Natural killer cell (primary cell): ENCODE measurements at regions of chr6 and their contacts with region 1.

Region 1: GRCh38 chr6:105733565-105734162 is 330.8 kb upstream of the PREP start:
- DNase-seq: peak in 1 of 2 donors; percentile 71
- ATAC-seq: no peak
- H3K4me3 ChIP-seq: no peak overlapping the region
- H3K4me3 Mint-ChIP-seq: no peak overlapping the region
- H3K27ac ChIP-seq: no peak overlapping the region
- H3K27ac Mint-ChIP-seq: no peak overlapping the region
- H3K4me1 ChIP-seq: no peaks in the 10 kb centered on the region
- H3K4me1 Mint-ChIP-seq: no peaks in the 10 kb centered on the region
- H3K27me3 ChIP-seq: no peaks in the 10 kb centered on the region
- H3K27me3 Mint-ChIP-seq: no peaks in the 10 kb centered on the region
- CTCF ChIP-seq: peak; percentile 68

Region 2: GRCh38 chr6:105452924-105453756 is 280.5 kb before region 1 on chr6:
- intact Hi-C with region 1: loop called (anchors 10 kb)
- DNase-seq: peak; percentile 45 to 81
- ATAC-seq: peak; percentile 97 to 100 (median 97)
- H3K4me3 ChIP-seq: peak overlapping the region; percentile 5
- H3K4me3 Mint-ChIP-seq: peak overlapping the region; percentile 72
- H3K27ac ChIP-seq: peak overlapping the region; percentile 84
- H3K27ac Mint-ChIP-seq: peak overlapping the region; percentile 86 to 91
- H3K4me1 ChIP-seq: peaks cover 16% of the 10 kb centered on the region
- H3K4me1 Mint-ChIP-seq: peaks cover 31 to 39% of the 10 kb centered on the region in 2 donors
- H3K27me3 ChIP-seq: no peaks in the 10 kb centered on the region
- H3K27me3 Mint-ChIP-seq: peaks cover 0 to 5% of the 10 kb centered on the region in 2 donors
- CTCF ChIP-seq: no peak

Region 3: GRCh38 chr6:105484238-105485161 is 249.2 kb before region 1 on chr6:
- intact Hi-C with region 1: loop called (anchors 2 kb)
- DNase-seq: peak in 1 of 2 donors; percentile 62
- ATAC-seq: peak; percentile 70 to 77 (median 70)
- H3K4me3 ChIP-seq: no peak overlapping the region
- H3K4me3 Mint-ChIP-seq: peak overlapping the region; percentile 7
- H3K27ac ChIP-seq: peak overlapping the region; percentile 36
- H3K27ac Mint-ChIP-seq: peak overlapping the region; percentile 6 to 51
- H3K4me1 ChIP-seq: peaks cover 6% of the 10 kb centered on the region
- H3K4me1 Mint-ChIP-seq: peaks cover 28% of the 10 kb centered on the region in 2 donors
- H3K27me3 ChIP-seq: no peaks in the 10 kb centered on the region
- H3K27me3 Mint-ChIP-seq: no peaks in the 10 kb centered on the region
- CTCF ChIP-seq: peak; percentile 87

Region 4: GRCh38 chr6:106300944-106301343 is 567.3 kb after region 1 on chr6:
- intact Hi-C with region 1: loop called (anchors 2 kb)
- DNase-seq: peak in 1 of 2 donors; percentile 57
- ATAC-seq: peak in 1 of 3 donors; percentile 53
- H3K4me3 ChIP-seq: no peak overlapping the region
- H3K4me3 Mint-ChIP-seq: no peak overlapping the region
- H3K27ac ChIP-seq: no peak overlapping the region
- H3K27ac Mint-ChIP-seq: no peak overlapping the region
- H3K4me1 ChIP-seq: no peaks in the 10 kb centered on the region
- H3K4me1 Mint-ChIP-seq: peaks cover 11 to 16% of the 10 kb centered on the region in 2 donors
- H3K27me3 ChIP-seq: no peaks in the 10 kb centered on the region
- H3K27me3 Mint-ChIP-seq: no peaks in the 10 kb centered on the region
- CTCF ChIP-seq: peak; percentile 34